ENCODE measurements at regions of chrX and their contacts with region 1.

Region 1: GRCh38 chrX:115690511-115691216 is 129.7 kb downstream of the PLS3 start:
- DNase-seq: peak; percentile 0
- H3K4me3 Mint-ChIP-seq: no peak overlapping the region
- H3K27ac Mint-ChIP-seq: no peak overlapping the region
- H3K4me1 Mint-ChIP-seq: no peaks in the 10 kb centered on the region
- H3K27me3 Mint-ChIP-seq: no peaks in the 10 kb centered on the region

Region 2: DNA sequence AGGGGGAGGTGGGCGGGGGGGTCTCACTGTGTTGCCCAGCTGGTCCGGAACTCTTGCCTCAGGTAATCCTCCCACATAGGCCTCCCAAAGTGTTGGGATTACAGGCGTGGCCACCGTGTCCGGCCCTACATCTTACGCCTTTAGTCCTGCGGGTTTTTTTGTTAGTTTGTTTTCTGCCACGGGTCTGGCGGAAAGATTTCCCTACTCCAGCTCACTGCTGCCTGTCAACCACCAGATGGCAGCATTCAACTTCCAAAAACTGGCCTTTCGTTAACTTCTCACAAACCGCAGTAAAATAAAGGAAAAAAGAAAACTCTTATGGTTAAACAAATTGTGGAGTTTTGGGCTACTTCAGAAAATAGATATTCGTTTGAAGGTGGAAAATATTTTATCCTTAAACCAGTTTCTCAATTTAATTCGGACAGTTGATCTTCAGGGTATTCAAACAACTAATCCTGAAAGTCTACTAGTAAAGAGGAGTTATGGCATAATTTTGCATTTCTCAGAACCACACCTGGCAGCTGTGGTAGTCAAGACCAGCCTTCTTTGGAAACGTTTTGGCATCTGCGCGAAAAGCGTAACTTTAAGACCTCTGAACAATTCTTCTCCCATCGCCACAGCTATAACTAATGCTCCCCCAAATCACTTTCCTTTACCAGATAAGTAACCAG is 360.0 kb before region 1 on chrX:
- intact Hi-C with region 1: loop called (anchors 1 kb)
- DNase-seq: no peak
- H3K4me3 Mint-ChIP-seq: no peak overlapping the region
- H3K27ac Mint-ChIP-seq: no peak overlapping the region
- H3K4me1 Mint-ChIP-seq: no peaks in the 10 kb centered on the region
- H3K27me3 Mint-ChIP-seq: no peaks in the 10 kb centered on the region

Region 3: GRCh38 chrX:115625572-115626301 is 64.9 kb before region 1 on chrX:
- intact Hi-C with region 1: no loop called
- DNase-seq: no peak
- H3K4me3 Mint-ChIP-seq: no peak overlapping the region
- H3K27ac Mint-ChIP-seq: no peak overlapping the region
- H3K4me1 Mint-ChIP-seq: no peaks in the 10 kb centered on the region
- H3K27me3 Mint-ChIP-seq: no peaks in the 10 kb centered on the region

Region 4: DNA sequence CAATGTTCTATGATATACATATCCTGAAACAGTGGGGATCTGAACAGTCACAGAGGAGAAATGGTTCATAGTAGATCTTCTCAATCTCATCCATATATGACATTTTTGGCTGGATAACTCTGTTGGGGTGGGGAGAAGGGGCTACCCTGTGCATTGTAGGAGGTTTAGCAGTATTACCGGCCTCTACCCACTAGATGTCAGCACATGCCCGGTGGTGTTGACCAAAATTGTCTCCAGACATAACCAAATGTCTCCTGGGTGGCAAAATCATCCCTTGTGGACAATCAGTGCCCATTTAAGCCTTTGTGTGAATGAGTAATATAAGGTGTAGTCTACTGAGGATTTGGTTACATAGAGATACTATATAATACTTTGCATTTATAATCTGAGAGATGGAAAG is 39.7 kb before region 1 on chrX:
- intact Hi-C with region 1: loop called (anchors 2 kb)
- DNase-seq: no peak
- H3K4me3 Mint-ChIP-seq: no peak overlapping the region
- H3K27ac Mint-ChIP-seq: no peak overlapping the region
- H3K4me1 Mint-ChIP-seq: no peaks in the 10 kb centered on the region
- H3K27me3 Mint-ChIP-seq: no peaks in the 10 kb centered on the region